AG04450 (cell line): ENCODE measurements at regions of chr10 and their contacts with region 1.

Region 1: GRCh38 chr10:107919626-107920235 is 755.2 kb upstream of the SORCS1 start:
- DNase-seq: no peak
- H3K4me3 ChIP-seq: no peak overlapping the region
- H3K27ac ChIP-seq: no peak overlapping the region
- H3K27me3 ChIP-seq: no peaks in the 10 kb centered on the region
- CTCF ChIP-seq: no peak

Region 2: GRCh38 chr10:108779501-108779900 is 859.8 kb after region 1 on chr10:
- CTCF ChIA-PET with region 1: interaction called, 11 read pairs
- POLR2A ChIA-PET with region 1: no interaction called
- DNase-seq: no peak
- H3K4me3 ChIP-seq: no peak overlapping the region
- H3K27ac ChIP-seq: no peak overlapping the region
- H3K27me3 ChIP-seq: no peaks in the 10 kb centered on the region
- CTCF ChIP-seq: no peak